ENCODE measurements at regions of chr14 and their contacts with region 1.

Region 1: GRCh38 chr14:84209021-84209420 is 1320.9 kb upstream of the FLRT2 start:
- DNase-seq: no peak

Region 2: DNA sequence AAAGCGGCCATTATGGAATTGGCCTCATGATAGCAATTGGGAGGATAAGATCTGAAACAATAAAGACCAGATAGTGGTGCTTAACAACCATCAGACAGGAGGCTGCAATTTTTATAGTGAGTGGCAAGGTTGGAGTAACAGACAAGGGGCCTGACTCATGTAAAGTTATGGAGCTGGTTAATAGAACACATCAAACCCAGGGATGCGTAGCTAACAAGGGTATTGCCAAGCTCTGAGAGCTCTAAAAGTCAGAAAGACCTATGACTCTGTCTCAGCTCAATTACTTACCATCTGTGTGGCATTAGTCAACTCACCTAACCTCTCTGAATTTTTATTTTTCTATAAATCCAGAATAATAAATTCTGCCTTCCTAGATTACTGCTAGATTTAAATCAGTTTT is 410.6 kb before region 1 on chr14:
- intact Hi-C with region 1: no loop called
- DNase-seq: no peak

Region 3: GRCh38 chr14:84127430-84127829 is 81.6 kb before region 1 on chr14:
- intact Hi-C with region 1: no loop called
- DNase-seq: no peak

Region 4: DNA sequence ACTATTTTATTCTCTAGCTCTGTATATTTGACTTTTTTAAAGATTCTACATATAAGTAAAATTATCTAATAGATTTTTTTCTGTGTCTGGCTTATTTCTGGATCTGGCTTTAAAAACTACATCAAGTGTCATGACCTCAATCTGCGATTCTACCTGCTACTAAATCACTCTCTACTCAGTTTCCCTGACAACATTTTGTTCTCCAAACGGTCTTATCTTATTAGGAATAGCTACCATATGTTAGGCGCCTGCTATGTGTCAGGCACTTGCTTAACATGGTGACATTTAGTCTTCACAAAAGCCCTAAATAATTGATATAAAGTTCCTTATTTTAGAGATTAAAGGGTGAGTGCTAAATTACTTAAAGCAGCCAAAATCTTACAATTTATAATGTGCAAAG is 42.0 kb before region 1 on chr14:
- intact Hi-C with region 1: loop called in 1 of 2 experiments (anchors 2 kb)
- DNase-seq: no peak

Measured in posterior vena cava (tissue), 2 donors.